ENCODE measurements at regions of chr1 and their contacts with region 1.

Region 1: GRCh38 chr1:201224666-201225370 is 34.2 kb downstream of the IGFN1 start:
- DNase-seq: no peak
- ATAC-seq: no peak
- H3K4me3 ChIP-seq: no peak overlapping the region
- H3K27ac ChIP-seq: no peak overlapping the region
- H3K4me1 ChIP-seq: 0 out of 3 replicates have a peak, but pooled peaks cover 4% of the 10 kb centered on the region
- CTCF ChIP-seq: no peak
- EP300 ChIP-seq: no peak
- POLR2A ChIP-seq: no peak
- RAD21 ChIP-seq: no peak

Region 2: DNA sequence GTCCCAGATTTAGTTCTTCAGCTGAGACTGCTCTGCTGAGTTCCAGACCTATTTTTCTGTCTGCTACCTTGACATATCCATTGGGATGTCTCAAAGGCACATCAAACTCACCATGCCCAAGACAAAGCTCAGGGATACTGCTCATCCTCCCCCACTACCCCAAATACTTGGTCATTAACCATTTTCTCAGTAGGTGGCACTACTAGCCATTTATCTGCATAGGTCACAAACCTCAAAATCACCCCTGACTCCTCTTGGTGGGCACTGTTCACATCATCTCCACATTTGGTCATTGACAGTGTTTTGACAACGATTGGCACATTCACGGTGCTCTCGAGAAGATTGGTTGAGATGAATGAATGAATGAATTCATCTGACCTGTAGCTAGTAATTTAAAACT is 144.7 kb before region 1 on chr1:
- CTCF ChIA-PET with region 1: interaction called, 11 read pairs
- POLR2A ChIA-PET with region 1: no interaction called
- DNase-seq: no peak
- ATAC-seq: no peak; a peak in 1 of 6 replicates
- H3K4me3 ChIP-seq: no peak overlapping the region
- H3K27ac ChIP-seq: no peak overlapping the region
- H3K4me1 ChIP-seq: no peaks in the 10 kb centered on the region
- CTCF ChIP-seq: no peak
- EP300 ChIP-seq: no peak
- POLR2A ChIP-seq: no peak
- RAD21 ChIP-seq: no peak

Region 3: DNA sequence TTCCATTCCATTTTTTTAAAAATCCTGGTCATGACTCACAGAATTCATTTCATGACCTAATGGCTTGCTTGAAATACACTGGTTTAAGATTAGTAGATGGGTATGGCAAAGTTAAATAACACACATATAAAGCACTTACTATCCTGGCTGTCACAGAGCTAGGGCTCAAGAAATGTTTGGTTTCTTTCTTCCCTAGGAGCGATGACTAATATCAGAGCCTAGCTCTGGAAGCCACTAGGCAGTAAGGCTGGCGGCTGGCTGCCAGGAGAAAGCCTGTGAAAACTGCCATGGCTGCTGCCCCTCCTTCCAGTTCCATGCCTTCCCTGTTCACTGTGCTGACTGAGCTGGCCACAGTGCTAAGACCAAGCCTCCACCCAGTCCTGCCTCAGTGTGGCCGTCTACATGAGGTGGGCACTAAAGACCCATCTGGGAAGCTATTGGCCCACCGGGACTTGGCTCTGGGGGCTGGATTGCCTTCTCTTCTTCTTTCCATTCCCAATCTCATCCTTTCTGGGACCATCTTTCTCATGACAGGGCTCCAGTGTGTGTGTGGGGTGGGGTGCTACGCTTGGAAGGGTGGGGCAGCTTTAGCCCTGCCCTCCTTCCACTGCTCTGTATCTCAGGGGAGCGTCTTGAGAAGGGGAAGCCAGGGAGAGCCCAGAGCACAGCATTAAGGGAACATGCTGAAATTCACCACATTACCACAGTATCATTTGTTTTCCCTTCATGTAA is 87.1 kb before region 1 on chr1:
- CTCF ChIA-PET with region 1: interaction called, 12 read pairs
- POLR2A ChIA-PET with region 1: no interaction called
- DNase-seq: no peak
- ATAC-seq: peak; percentile 39 to 46; a peak in 5 of 6 replicates
- H3K4me3 ChIP-seq: no peak overlapping the region
- H3K27ac ChIP-seq: peak overlapping the region in 1 of 2 experiments; percentile 16; a peak in 1 of 6 replicates
- H3K4me1 ChIP-seq: peaks cover 13% of the 10 kb centered on the region; the same call in 1 of the 3 replicates
- CTCF ChIP-seq: no peak
- EP300 ChIP-seq: no peak
- POLR2A ChIP-seq: no peak
- RAD21 ChIP-seq: no peak

Region 4: GRCh38 chr1:201154389-201155165 is 70.2 kb before region 1 on chr1 and contains the start of gene TMEM9:
- CTCF ChIA-PET with region 1: interaction called, 112 read pairs
- POLR2A ChIA-PET with region 1: no interaction called
- DNase-seq: peak; percentile 93 to 97
- ATAC-seq: peak; percentile 88 to 95
- H3K4me3 ChIP-seq: peak within 1 kb of the TSS; percentile 95
- H3K27ac ChIP-seq: peak within 1 kb of the TSS; percentile 91 to 97
- H3K4me1 ChIP-seq: peaks cover 7% of the 10 kb centered on the region
- CTCF ChIP-seq: no peak
- EP300 ChIP-seq: no peak
- POLR2A ChIP-seq: no peak
- RAD21 ChIP-seq: no peak
- polyA plus RNA-seq, gene TMEM9: 97.0 and 119 TPM in 2 replicates

Region 5: DNA sequence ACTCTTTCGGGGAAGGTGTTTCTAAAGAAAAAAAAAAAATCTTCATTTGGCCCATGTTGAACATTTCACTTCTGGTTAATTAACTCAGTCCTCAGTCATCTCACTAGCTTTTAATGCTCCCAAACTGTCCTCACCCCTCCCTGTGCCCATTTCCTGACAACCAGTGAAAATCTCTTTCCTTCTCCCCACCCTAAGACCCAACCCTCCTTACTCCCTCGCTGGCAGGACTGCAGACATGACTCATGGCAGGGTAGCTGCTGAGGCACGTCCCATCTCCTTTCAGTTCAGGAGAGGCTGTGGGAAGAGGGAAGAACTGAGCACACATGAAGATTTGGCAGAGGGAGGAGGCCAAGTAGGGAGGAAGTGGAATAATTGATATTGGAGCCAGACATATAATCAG is 71.0 kb after region 1 on chr1:
- CTCF ChIA-PET with region 1: no interaction called
- POLR2A ChIA-PET with region 1: no interaction called
- DNase-seq: peak; percentile 48 to 64
- ATAC-seq: peak; percentile 48 to 76; a peak in 3 of 6 replicates
- H3K4me3 ChIP-seq: no peak overlapping the region
- H3K27ac ChIP-seq: peak overlapping the region; percentile 30 to 73
- H3K4me1 ChIP-seq: peaks cover 39% of the 10 kb centered on the region
- CTCF ChIP-seq: no peak
- EP300 ChIP-seq: no peak
- POLR2A ChIP-seq: no peak; the same call in 1 of the 2 replicates
- RAD21 ChIP-seq: no peak